ENCODE measurements at regions of chr19 and their contacts with region 1.

Region 1: DNA sequence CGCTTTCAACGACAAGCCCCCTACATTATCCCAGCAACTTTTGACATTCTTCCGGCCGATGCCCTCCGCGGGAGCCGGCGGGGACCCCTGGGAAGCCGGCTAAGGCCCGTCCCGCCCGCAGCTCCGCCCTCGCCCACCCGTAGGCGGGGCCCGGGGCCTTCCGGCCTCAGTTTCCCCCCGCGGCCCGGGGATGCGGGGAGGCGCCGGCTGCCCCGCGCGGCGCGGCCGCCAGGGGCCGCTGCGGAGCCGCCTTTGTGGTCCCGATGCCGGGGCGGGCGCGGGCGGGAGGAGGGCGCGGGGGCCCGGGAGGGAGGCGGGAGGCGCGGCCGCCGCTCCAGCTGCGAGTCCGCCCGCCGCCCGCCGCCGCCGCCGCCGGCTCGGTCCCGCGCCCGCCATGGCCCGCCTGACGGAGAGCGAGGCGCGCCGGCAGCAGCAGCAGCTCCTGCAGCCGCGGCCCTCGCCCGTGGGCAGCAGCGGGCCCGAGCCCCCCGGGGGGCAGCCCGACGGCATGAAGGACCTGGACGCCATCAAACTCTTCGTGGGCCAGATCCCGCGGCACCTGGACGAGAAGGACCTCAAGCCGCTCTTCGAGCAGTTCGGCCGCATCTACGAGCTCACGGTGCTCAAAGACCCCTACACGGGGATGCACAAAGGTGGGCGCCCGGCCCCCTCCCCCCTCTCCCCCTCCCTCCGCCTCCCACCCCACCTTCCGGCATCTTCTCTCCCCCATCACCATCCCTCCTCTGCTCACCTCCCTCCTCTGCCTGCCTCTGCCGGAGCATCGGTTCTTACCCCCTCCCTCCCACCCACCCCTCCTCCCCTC is at the start of gene CELF5:
- DNase-seq: peak; percentile 99
- H3K4me3 ChIP-seq: peak within 1 kb of the TSS; percentile 26 to 49; a peak in 3 of 4 replicates
- H3K27ac ChIP-seq: no peak within 1 kb of the TSS; a peak in 1 of 4 replicates
- H3K4me1 ChIP-seq: peaks cover 0 to 3% of the 10 kb centered on the region in 2 experiments; a peak in 1 of 4 replicates
- H3K27me3 ChIP-seq: no peaks in the 10 kb centered on the region
- CTCF ChIP-seq: peak; percentile 53
- EP300 ChIP-seq: no peak
- RAD21 ChIP-seq: peak; percentile 37; the same call in 1 of the 2 replicates
- polyA plus RNA-seq, gene CELF5: 0.33 and 0.57 TPM in 2 replicates

Region 2: GRCh38 chr19:3108775-3109174 is 115.8 kb before region 1 on chr19:
- CTCF ChIA-PET with region 1: no interaction called
- POLR2A ChIA-PET with region 1: no interaction called
- DNase-seq: peak; percentile 84
- H3K4me3 ChIP-seq: no peak overlapping the region
- H3K27ac ChIP-seq: no peak overlapping the region
- H3K4me1 ChIP-seq: no peaks in the 10 kb centered on the region
- H3K27me3 ChIP-seq: no peaks in the 10 kb centered on the region
- CTCF ChIP-seq: peak; percentile 85
- EP300 ChIP-seq: no peak
- RAD21 ChIP-seq: peak; percentile 63

Region 3: GRCh38 chr19:3210347-3211017 is 14.1 kb before region 1 on chr19:
- CTCF ChIA-PET with region 1: interaction called, 17 read pairs
- POLR2A ChIA-PET with region 1: no interaction called
- DNase-seq: peak; percentile 90
- H3K4me3 ChIP-seq: no peak overlapping the region; a peak in 1 of 4 replicates
- H3K27ac ChIP-seq: no peak overlapping the region
- H3K4me1 ChIP-seq: no peaks in the 10 kb centered on the region
- H3K27me3 ChIP-seq: no peaks in the 10 kb centered on the region
- CTCF ChIP-seq: peak; percentile 64
- EP300 ChIP-seq: no peak
- RAD21 ChIP-seq: peak; percentile 42

Region 4: DNA sequence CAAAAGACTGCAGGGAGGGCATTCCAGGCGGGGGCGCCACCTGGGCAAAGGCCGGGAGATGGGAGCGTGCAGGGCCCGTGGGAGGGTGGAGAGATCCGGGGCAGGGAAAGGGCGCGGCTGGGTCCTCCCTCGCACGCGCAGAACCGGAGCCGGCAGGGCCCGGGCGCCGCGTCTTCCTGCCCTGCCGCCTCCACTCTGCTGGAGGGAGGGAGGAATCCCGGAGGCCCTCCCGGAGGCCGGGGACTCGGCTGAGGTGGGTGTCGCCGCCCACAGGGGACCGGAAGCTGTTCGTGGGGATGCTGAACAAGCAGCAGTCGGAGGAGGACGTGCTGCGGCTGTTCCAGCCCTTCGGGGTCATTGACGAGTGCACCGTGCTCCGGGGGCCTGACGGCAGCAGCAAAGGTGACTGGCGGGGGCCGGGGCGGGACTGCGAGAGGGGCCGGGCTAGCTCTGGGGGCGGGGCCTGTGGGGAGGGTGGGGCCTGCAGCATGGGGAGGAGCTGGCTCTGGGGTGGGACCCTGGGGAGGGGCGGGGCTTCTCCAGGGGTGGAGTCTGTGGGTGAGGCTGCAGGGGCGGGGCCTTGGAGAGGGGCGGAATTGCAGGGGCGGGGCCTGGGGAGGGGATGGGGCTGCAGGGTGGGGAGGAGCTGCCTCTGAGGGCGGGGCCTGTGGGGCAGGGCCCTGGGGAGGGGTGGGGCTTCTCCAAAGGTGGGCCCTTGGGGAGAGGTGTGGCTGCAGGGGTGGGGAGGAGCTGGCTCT is 51.2 kb after region 1 on chr19:
- CTCF ChIA-PET with region 1: interaction called, 12 read pairs
- POLR2A ChIA-PET with region 1: no interaction called
- DNase-seq: peak; percentile 100
- H3K4me3 ChIP-seq: peak overlapping the region; percentile 52 to 60
- H3K27ac ChIP-seq: peak overlapping the region in 1 of 2 experiments; percentile 48; a peak in 1 of 4 replicates
- H3K4me1 ChIP-seq: peaks cover 0 to 7% of the 10 kb centered on the region in 2 experiments; a peak in 2 of 4 replicates
- H3K27me3 ChIP-seq: no peaks in the 10 kb centered on the region
- CTCF ChIP-seq: peak; percentile 35
- EP300 ChIP-seq: no peak
- RAD21 ChIP-seq: no peak